ENCODE measurements at regions of chr1 and their contacts with region 1.

Region 1: GRCh38 chr1:229024528-229025130 is 246.3 kb upstream of the RAB4A start:
- DNase-seq: peak; percentile 41
- H3K4me3 Mint-ChIP-seq: no peak overlapping the region
- H3K27ac Mint-ChIP-seq: no peak overlapping the region
- H3K4me1 Mint-ChIP-seq: peaks cover 25% of the 10 kb centered on the region
- H3K27me3 Mint-ChIP-seq: no peaks in the 10 kb centered on the region
- CTCF ChIP-seq: no peak

Region 2: DNA sequence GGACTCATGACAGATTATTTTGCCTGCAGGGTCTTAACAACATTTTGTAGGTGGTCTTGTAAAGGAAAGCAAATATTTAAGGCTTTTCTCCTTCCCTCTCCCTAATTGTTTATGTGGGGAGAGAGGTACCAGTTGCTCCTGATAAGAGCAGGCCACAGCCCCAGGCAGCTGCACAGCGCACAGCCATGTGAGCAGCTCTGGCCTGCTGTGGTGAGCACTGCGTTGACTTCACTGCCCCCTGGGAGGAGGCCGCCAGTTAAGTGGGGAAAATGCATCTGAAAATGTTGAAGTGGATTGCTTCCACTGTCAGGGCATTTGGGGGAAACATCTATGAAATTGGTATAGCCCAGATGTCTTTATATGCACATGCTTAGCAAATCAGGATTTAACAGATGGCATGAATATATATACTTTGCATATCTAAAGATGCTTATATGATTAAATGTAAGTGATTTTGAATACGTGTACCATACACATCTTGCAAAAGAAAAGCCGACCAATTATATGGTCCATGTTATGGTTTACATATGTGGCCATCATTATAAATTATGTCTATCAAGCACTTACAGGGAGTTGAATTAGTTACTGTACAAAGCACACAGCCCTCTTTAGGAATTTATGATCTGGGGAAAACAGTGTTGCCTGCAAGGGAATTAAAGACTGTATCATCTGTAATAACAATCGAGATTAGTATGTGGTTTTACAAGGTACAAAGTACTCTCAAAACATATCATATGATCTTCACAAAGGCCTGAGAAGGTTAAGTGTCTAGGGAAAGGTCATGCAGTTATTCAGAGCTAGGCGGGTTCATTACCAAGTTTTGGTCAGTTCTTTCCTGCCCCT is 157.3 kb before region 1 on chr1:
- CTCF ChIA-PET with region 1: no interaction called
- intact Hi-C with region 1: no loop called
- DNase-seq: no peak
- H3K4me3 Mint-ChIP-seq: no peak overlapping the region
- H3K27ac Mint-ChIP-seq: no peak overlapping the region
- H3K4me1 Mint-ChIP-seq: peaks cover 25% of the 10 kb centered on the region
- H3K27me3 Mint-ChIP-seq: no peaks in the 10 kb centered on the region
- CTCF ChIP-seq: no peak

Region 3: GRCh38 chr1:229094476-229095311 is 70.1 kb after region 1 on chr1:
- CTCF ChIA-PET with region 1: no interaction called
- intact Hi-C with region 1: no loop called
- DNase-seq: no peak
- H3K4me3 Mint-ChIP-seq: no peak overlapping the region
- H3K27ac Mint-ChIP-seq: peak overlapping the region; percentile 82
- H3K4me1 Mint-ChIP-seq: peaks cover 37% of the 10 kb centered on the region
- H3K27me3 Mint-ChIP-seq: no peaks in the 10 kb centered on the region
- CTCF ChIP-seq: no peak

Region 4: DNA sequence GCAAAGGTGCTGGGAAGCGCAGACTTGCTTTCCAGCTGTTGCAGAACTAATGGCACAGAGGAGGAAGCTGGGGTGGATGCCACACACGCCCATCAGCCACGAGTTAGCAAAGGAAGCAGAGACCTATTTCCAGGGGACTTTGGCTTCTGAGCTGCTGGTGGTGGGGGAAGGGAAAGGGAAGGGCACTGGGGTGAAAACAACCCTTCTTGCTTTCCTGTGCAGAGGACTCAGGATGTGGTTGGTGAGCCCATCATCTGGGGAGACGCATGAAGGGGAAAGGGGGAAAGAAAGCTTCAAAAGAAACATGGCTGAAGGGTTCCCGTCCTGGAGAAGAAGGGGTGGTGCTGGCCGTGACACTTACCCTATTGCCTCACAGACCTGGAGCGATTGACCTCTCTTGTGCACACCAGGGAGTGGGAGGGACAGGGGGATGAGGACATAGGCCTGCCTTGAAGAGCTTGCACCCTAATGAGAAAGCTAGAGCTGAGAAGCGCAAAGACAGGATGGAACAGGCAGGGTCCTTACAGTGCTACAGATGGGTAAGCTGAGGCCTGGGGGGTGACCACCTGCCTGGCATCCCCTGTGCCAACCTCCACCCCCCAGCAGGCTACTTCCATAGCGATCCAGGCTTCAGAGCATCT is 105.5 kb after region 1 on chr1:
- CTCF ChIA-PET with region 1: no interaction called
- intact Hi-C with region 1: loop called (anchors 10 kb)
- DNase-seq: no peak
- H3K4me3 Mint-ChIP-seq: no peak overlapping the region
- H3K27ac Mint-ChIP-seq: peak overlapping the region; percentile 98
- H3K4me1 Mint-ChIP-seq: peaks cover 89% of the 10 kb centered on the region
- H3K27me3 Mint-ChIP-seq: no peaks in the 10 kb centered on the region
- CTCF ChIP-seq: no peak

Region 5: GRCh38 chr1:229221104-229222019 is 196.7 kb after region 1 on chr1:
- CTCF ChIA-PET with region 1: no interaction called
- intact Hi-C with region 1: no loop called
- DNase-seq: peak; percentile 75
- H3K4me3 Mint-ChIP-seq: no peak overlapping the region
- H3K27ac Mint-ChIP-seq: no peak overlapping the region
- H3K4me1 Mint-ChIP-seq: peaks cover 24% of the 10 kb centered on the region
- H3K27me3 Mint-ChIP-seq: no peaks in the 10 kb centered on the region
- CTCF ChIP-seq: no peak

Measured in Calu3 (cell line).